Endothelial cell of umbilical vein (primary cell): ENCODE measurements at regions of chr19 and their contacts with region 1.

Region 1: GRCh38 chr19:16111160-16111908 is at the start of gene RAB8A:
- DNase-seq: peak; percentile 100
- H3K4me3 ChIP-seq: peak within 1 kb of the TSS; percentile 75 to 96 (median 87)
- H3K27ac ChIP-seq: peak within 1 kb of the TSS; percentile 75
- H3K4me1 ChIP-seq: peaks cover 12% of the 10 kb centered on the region
- H3K27me3 ChIP-seq: no peaks in the 10 kb centered on the region
- CTCF ChIP-seq: peak; percentile 93 to 96
- POLR2A ChIP-seq: no peak
- total RNA-seq, gene RAB8A: 98.9 and 107 TPM in 2 replicates

Region 2: GRCh38 chr19:16076154-16076957 is 35.0 kb before region 1 on chr19 and contains the start of gene TPM4:
- CTCF ChIA-PET with region 1: interaction called, 4 read pairs
- POLR2A ChIA-PET with region 1: interaction called, 4 read pairs
- dilution Hi-C with region 1: no loop called
- intact Hi-C with region 1: loop called (anchors 1 kb)
- DNase-seq: peak; percentile 90
- H3K4me3 ChIP-seq: peak within 1 kb of the TSS; percentile 64 to 96 (median 95)
- H3K27ac ChIP-seq: peak within 1 kb of the TSS; percentile 100
- H3K4me1 ChIP-seq: peaks cover 39% of the 10 kb centered on the region
- H3K27me3 ChIP-seq: no peaks in the 10 kb centered on the region
- CTCF ChIP-seq: no peak
- POLR2A ChIP-seq: peak; percentile 89
- total RNA-seq, gene TPM4: 875 and 924 TPM in 2 replicates

Region 3: DNA sequence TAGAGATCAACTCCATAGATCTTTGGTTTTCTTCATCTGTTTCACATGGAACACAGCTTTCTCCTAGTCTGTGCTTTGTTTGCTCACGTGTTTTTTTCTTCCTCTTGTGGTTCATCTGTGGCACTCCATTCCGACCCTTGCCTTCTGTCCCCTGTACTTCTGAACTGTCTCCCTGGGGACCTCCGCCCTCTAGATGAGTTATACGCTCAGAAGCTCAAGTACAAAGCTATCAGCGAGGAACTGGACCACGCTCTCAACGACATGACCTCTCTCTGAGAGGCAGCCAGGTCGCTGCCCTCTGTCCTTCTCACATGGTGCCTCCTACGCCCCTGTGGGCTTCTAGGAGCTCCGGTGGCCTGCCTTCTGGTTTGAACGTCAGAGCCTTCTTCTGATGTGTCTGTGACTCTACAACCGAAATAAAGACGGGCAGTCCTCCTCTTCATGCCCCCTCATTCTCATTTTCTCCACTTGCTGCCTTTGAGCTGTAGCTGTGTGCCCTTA is 16.2 kb before region 1 on chr19:
- CTCF ChIA-PET with region 1: interaction called, 11 read pairs
- POLR2A ChIA-PET with region 1: no interaction called
- dilution Hi-C with region 1: no loop called
- intact Hi-C with region 1: no loop called
- DNase-seq: no peak
- H3K4me3 ChIP-seq: no peak overlapping the region
- H3K27ac ChIP-seq: no peak overlapping the region
- H3K4me1 ChIP-seq: peaks cover 13% of the 10 kb centered on the region
- H3K27me3 ChIP-seq: no peaks in the 10 kb centered on the region
- CTCF ChIP-seq: no peak
- POLR2A ChIP-seq: no peak

Region 4: DNA sequence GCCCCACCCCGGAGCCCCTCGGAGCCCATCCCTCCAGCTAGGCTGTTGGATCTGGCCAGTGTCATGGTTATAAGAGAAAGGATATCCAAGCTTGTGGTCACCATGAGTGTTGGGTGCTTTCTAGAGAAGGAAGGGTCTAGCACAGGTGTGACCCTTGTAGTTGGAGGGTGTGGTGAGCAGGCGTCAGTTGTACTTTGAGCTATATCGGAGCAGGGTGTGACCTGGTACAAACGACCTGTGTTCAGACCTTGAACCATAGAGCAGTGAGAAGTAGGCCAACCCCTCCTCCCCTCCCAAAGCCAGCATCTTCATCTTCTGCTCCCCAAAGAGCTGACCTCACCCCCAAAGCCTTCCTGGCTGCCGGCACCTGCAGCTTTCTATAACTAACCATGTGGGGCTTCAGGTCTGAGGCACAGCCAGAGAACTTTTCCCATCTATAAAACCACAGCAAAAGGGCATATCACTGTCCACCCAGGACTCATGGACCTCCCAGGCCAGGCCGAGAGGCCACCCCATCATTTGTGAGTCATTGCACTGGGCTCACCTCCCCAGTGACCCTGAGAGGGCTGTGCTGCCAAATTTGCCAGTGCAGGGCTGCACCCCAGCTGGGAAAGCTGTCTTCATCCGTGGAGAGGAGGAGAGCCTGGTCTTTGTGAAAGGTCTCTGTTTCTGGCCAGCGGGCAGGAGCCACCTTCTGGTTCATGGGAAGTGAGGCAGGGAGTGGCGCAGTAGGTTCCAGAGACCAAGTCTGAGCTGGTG is 14.6 kb after region 1 on chr19:
- CTCF ChIA-PET with region 1: no interaction called
- POLR2A ChIA-PET with region 1: no interaction called
- dilution Hi-C with region 1: no loop called
- intact Hi-C with region 1: no loop called
- DNase-seq: no peak
- H3K4me3 ChIP-seq: no peak overlapping the region
- H3K27ac ChIP-seq: no peak overlapping the region
- H3K4me1 ChIP-seq: no peaks in the 10 kb centered on the region
- H3K27me3 ChIP-seq: no peaks in the 10 kb centered on the region
- CTCF ChIP-seq: no peak
- POLR2A ChIP-seq: no peak

Region 5: GRCh38 chr19:16191216-16191908 is 80.0 kb after region 1 on chr19:
- CTCF ChIA-PET with region 1: no interaction called
- POLR2A ChIA-PET with region 1: no interaction called
- dilution Hi-C with region 1: no loop called
- intact Hi-C with region 1: no loop called
- DNase-seq: no peak
- H3K4me3 ChIP-seq: no peak overlapping the region
- H3K27ac ChIP-seq: no peak overlapping the region
- H3K4me1 ChIP-seq: peaks cover 2% of the 10 kb centered on the region
- H3K27me3 ChIP-seq: no peaks in the 10 kb centered on the region
- CTCF ChIP-seq: no peak
- POLR2A ChIP-seq: no peak

Region 6: GRCh38 chr19:16351133-16351809 is 239.9 kb after region 1 on chr19:
- CTCF ChIA-PET with region 1: no interaction called
- POLR2A ChIA-PET with region 1: no interaction called
- dilution Hi-C with region 1: no loop called
- intact Hi-C with region 1: no loop called
- DNase-seq: peak; percentile 77
- H3K4me3 ChIP-seq: no peak overlapping the region
- H3K27ac ChIP-seq: peak overlapping the region; percentile 51
- H3K4me1 ChIP-seq: peaks cover 32% of the 10 kb centered on the region
- H3K27me3 ChIP-seq: no peaks in the 10 kb centered on the region
- CTCF ChIP-seq: no peak
- POLR2A ChIP-seq: no peak